CD4-positive, alpha-beta memory T cell (primary cell): ENCODE measurements at regions of chr4 and their contacts with region 1.

Region 1: DNA sequence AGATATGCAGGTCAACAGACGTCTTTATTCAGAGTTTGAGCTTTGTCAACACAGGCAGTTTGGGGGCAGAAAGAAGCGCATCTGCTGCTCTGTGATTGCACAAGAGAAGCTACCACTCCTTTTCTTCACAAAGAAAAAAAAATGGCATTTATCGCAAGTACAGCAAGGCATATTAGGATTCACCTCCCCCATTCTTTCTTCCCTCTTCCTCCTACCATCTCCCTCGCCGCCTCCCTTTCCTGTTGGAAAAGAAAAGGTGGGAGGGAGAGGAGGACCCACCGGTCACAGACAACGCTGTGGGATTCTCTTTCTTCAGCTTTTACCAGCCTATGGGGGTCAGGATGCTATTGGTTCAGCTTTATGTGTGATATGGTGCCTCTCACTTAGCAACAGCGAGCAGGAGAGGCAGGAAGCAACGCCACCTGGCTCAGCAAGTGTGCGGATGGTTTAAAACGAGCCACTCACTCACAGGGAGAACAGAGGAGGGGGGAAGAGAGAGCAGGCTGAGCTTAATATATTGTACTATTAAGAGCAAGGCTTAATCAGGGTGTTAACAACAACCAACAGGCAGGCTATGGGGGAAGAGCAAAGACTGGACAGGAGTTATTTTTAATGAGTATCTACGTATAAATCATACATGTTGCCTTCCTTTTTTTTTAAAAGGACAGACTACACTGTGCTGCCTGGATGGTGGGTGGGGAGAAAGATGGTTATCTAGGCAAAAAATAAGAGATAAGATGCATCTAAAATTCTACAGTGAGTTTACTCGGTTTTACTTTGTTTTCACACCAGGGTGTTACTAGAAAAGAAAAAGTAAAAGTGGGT is 104.7 kb downstream of the MAML3 start:
- DNase-seq: peak; percentile 26 to 50 (median 42)
- H3K4me3 ChIP-seq: peak overlapping the region in 1 of 2 donors; percentile 17
- H3K4me3 Mint-ChIP-seq: peak overlapping the region; percentile 76 to 92 (median 85)
- H3K27ac ChIP-seq: no peak overlapping the region
- H3K27ac Mint-ChIP-seq: peak overlapping the region; percentile 1 to 91 (median 85)
- H3K4me1 ChIP-seq: peaks cover 19% of the 10 kb centered on the region
- H3K4me1 Mint-ChIP-seq: peaks cover 14 to 29% (median 16%) of the 10 kb centered on the region in 4 donors
- H3K27me3 ChIP-seq: no peaks in the 10 kb centered on the region
- H3K27me3 Mint-ChIP-seq: peaks cover 3 to 6% of the 10 kb centered on the region in 2 donors

Region 2: GRCh38 chr4:140061194-140061593 is 12.0 kb after region 1 on chr4:
- CTCF ChIA-PET with region 1: no interaction called
- POLR2A ChIA-PET with region 1: no interaction called
- intact Hi-C with region 1: no loop called
- DNase-seq: no peak
- H3K4me3 ChIP-seq: no peak overlapping the region
- H3K4me3 Mint-ChIP-seq: peak overlapping the region in 1 of 8 donors; percentile 2
- H3K27ac ChIP-seq: no peak overlapping the region
- H3K27ac Mint-ChIP-seq: no peak overlapping the region
- H3K4me1 ChIP-seq: no peaks in the 10 kb centered on the region
- H3K4me1 Mint-ChIP-seq: no peaks in the 10 kb centered on the region
- H3K27me3 ChIP-seq: no peaks in the 10 kb centered on the region
- H3K27me3 Mint-ChIP-seq: peaks cover 6% of the 10 kb centered on the region in 2 donors

Region 3: DNA sequence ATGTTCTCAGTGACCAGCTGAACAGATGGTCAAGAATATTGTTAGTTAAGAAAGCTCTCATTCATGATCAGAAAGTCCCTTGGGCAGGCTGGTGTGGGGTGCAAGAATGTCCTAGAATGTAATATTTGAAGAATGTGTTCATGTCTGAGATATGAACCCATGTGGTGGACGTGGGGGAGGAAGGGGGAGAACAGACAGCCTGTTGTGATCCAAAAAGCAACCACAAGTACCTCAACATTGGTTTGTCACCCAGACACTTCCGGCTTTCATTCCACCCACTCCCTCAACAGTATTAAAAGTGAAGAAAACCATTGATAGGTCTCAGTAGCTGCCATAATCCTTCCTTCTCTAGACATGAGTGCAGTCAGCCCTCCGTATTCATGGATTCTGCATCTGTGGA is 22.6 kb after region 1 on chr4:
- CTCF ChIA-PET with region 1: interaction called, 6 read pairs
- POLR2A ChIA-PET with region 1: no interaction called
- intact Hi-C with region 1: loop called (anchors 2 kb)
- DNase-seq: peak; percentile 54 to 81 (median 66)
- H3K4me3 ChIP-seq: no peak overlapping the region
- H3K4me3 Mint-ChIP-seq: peak overlapping the region; percentile 23 to 85 (median 67)
- H3K27ac ChIP-seq: no peak overlapping the region
- H3K27ac Mint-ChIP-seq: peak overlapping the region in 5 of 7 donors; percentile 70 to 86 (median 72)
- H3K4me1 ChIP-seq: peaks cover 27% of the 10 kb centered on the region
- H3K4me1 Mint-ChIP-seq: peaks cover 27 to 39% (median 33%) of the 10 kb centered on the region in 4 donors
- H3K27me3 ChIP-seq: no peaks in the 10 kb centered on the region
- H3K27me3 Mint-ChIP-seq: peaks cover 0 to 2% of the 10 kb centered on the region in 2 donors